Naive thymus-derived CD8-positive, alpha-beta T cell (primary cell): ENCODE measurements at regions of chr2 and their contacts with region 1.

Region 1: DNA sequence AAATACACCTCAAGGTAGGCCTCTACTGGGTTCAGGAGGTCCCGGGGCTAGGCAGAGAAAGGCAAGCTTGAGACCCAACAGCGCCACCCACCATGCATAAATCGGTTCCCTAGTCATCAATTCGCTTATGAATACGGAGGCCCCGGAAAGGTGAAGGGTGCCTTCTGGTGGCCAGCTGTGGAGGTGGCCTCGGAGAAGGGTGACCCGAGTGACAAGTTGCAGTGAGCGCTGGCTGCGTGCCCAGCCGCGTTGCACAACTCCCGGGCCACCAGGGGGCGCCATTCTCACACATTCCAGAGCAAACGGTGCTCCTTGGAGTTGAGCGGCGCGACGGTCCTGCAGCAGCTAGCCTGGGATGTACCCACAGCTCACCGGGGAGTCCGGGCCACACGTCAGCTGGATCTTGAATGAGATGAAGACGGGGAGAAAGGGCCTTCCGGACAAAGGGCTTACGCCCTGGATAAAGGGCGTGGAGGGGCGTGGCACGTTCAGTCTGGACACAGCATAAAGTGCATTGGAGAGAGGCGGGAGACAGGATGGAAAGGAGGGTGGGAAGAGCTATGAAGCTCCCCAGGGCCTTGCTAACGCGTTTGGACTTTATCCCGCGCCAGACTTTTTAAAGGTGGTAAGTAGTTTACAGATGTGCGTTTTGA is 20.4 kb downstream of the TMSB10 start:
- DNase-seq: peak; percentile 94 to 99 (median 97)
- ATAC-seq: peak; percentile 76 to 81
- H3K4me3 Mint-ChIP-seq: peak overlapping the region; percentile 89 to 100 (median 98)
- H3K27ac Mint-ChIP-seq: peak overlapping the region; percentile 94 to 100 (median 98)
- H3K4me1 Mint-ChIP-seq: peaks cover 24 to 54% (median 44%) of the 10 kb centered on the region in 4 donors
- H3K27me3 Mint-ChIP-seq: no peaks in the 10 kb centered on the region

Region 2: GRCh38 chr2:84846041-84846663 is 79.7 kb before region 1 on chr2:
- POLR2A ChIA-PET with region 1: interaction called, 13 read pairs
- DNase-seq: peak in 8 of 10 donors; percentile 55 to 88 (median 74)
- ATAC-seq: peak; percentile 74 to 76
- H3K4me3 Mint-ChIP-seq: peak overlapping the region; percentile 60 to 90 (median 82)
- H3K27ac Mint-ChIP-seq: peak overlapping the region; percentile 93 to 98 (median 97)
- H3K4me1 Mint-ChIP-seq: peaks cover 56 to 97% (median 95%) of the 10 kb centered on the region in 4 donors
- H3K27me3 Mint-ChIP-seq: no peaks in the 10 kb centered on the region

Region 3: GRCh38 chr2:84888401-84889276 is 37.2 kb before region 1 on chr2:
- POLR2A ChIA-PET with region 1: interaction called, 40 read pairs
- DNase-seq: peak in 8 of 10 donors; percentile 40 to 84 (median 56)
- ATAC-seq: peak; percentile 96 to 98
- H3K4me3 Mint-ChIP-seq: peak overlapping the region; percentile 72 to 92 (median 86)
- H3K27ac Mint-ChIP-seq: peak overlapping the region; percentile 94 to 100 (median 98)
- H3K4me1 Mint-ChIP-seq: peaks cover 30 to 73% (median 49%) of the 10 kb centered on the region in 4 donors
- H3K27me3 Mint-ChIP-seq: no peaks in the 10 kb centered on the region

Region 4: DNA sequence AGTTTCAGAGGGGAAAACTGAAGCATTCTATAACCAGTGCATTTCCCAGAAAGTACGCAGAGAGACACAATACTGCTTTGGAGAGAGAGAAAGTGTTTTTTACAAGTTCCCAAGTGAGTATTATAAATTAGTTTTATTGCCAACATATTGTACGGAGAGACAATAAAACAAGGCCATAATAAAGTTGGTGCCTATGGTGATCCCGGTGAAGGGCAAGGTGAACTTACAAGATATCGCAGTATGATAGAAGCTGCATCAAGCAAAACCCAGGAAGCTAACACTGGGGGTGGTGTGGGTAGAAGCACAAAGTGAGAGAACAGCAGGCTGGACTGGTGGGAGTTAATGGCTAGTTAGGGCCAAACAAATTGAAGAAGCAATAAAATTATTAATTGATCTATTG is 12.9 kb before region 1 on chr2:
- POLR2A ChIA-PET with region 1: interaction called, 361 read pairs
- DNase-seq: no peak
- ATAC-seq: no peak
- H3K4me3 Mint-ChIP-seq: no peak overlapping the region
- H3K27ac Mint-ChIP-seq: no peak overlapping the region
- H3K4me1 Mint-ChIP-seq: peaks cover 23 to 49% (median 41%) of the 10 kb centered on the region in 4 donors
- H3K27me3 Mint-ChIP-seq: no peaks in the 10 kb centered on the region

Region 5: DNA sequence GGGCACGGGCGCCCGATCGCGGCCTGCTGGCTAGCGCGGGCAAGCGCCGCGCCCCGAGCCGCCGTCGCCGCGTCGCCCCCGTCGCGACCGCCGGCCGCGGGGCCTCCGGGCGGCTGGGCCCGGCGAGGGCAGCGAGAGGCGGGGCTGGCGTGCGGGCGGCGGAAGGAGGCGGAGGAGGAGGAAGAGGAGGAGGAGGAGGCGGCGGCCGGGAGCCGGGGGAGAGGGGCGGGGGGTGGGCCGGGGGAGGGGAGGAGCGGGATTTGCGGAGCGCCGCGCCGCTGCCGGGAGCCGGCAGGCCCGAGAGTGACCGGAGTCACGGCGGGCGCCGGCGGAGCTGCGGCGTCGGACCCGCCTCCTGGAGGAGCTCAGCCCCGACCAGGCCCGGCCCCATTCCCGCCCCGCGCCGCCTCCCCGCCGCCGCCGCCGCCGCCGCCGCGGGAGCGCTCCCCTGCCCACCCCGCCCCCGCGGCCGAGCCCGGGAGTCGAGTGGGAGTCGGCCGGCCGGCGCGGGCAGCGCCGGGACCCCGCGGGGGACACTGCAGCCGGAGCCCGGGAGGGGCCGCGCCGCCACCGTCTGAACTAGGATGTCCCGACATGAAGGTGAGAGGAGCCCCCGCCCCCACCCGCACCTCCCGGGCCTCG is 45.1 kb after region 1 on chr2 and contains the start of gene KCMF1:
- POLR2A ChIA-PET with region 1: interaction called, 16 read pairs
- DNase-seq: peak; percentile 38 to 80 (median 64)
- ATAC-seq: peak; percentile 52 to 53
- H3K4me3 Mint-ChIP-seq: peak within 1 kb of the TSS; percentile 92 to 100 (median 99)
- H3K27ac Mint-ChIP-seq: peak within 1 kb of the TSS; percentile 97 to 100 (median 99)
- H3K4me1 Mint-ChIP-seq: peaks cover 28 to 67% (median 62%) of the 10 kb centered on the region in 4 donors
- H3K27me3 Mint-ChIP-seq: no peaks in the 10 kb centered on the region
- polyA plus RNA-seq, gene KCMF1: 13.3 to 30.2 (median 28.1) TPM